ENCODE measurements at regions of chr17 and their contacts with region 1.

Region 1: DNA sequence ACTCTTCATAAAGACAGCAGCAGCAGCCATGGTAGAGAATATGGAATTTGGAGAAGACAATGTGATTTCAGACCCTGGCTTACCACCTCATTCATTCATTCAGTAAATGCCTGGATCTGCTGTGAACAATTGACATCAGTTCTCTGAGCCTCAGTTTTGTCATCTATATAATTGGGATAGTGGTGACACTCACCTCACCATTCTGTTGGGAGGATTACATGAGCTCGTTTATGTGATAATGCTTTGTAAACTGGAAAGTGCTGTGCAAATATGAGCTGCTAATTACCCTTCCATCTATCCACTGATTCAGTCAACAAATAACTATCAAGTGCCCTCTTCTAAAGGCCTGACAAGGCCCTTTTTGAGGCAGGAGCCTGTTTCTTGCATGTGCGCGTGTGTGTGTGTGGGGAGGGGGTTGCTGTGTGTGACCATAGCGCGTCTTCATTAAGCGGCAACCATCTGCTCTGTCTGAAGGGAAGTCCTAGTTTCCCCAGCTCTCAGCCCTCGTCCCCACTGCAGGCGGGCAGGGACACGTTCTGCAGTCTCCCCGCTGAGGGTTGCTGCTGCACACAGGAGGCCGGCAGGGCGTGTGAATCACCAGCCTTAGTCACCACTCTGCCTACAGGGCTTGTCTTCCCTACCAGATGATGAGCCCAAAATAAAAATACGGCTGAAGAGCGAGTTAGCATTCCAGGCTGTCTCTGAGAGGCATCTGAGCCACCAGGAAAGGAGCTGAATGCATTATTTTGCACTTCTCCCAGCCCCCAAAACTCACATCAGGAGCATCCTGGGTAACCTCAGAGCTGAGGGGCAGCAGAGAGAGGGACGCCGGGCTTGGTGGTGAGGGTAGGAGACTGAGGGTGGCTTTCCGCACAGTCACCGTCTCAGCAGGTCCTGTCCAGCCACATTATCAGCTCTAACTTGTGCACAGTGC is 19.9 kb downstream of the ARL4D start:
- DNase-seq: peak; percentile 55
- ATAC-seq: peak; percentile 99
- H3K4me3 ChIP-seq: peak overlapping the region in 1 of 2 experiments; percentile 33; a peak in 1 of 4 replicates
- H3K27ac ChIP-seq: peak overlapping the region; percentile 39
- H3K4me1 ChIP-seq: peaks cover 6 to 27% of the 10 kb centered on the region in 2 experiments
- H3K27me3 ChIP-seq: no peaks in the 10 kb centered on the region
- CTCF ChIP-seq: no peak
- POLR2A ChIP-seq: no peak
- RAD21 ChIP-seq: peak; percentile 24; the same call in 1 of the 2 replicates

Region 2: GRCh38 chr17:43393944-43394482 is 24.7 kb before region 1 on chr17:
- CTCF ChIA-PET with region 1: interaction called, 5 read pairs
- POLR2A ChIA-PET with region 1: interaction called, 12 read pairs
- RAD21 ChIA-PET with region 1: no interaction called
- intact Hi-C with region 1: no loop called
- DNase-seq: peak; percentile 79
- ATAC-seq: peak; percentile 59
- H3K4me3 ChIP-seq: no peak overlapping the region
- H3K27ac ChIP-seq: no peak overlapping the region
- H3K4me1 ChIP-seq: peaks cover 3 to 24% of the 10 kb centered on the region in 2 experiments; a peak in 3 of 4 replicates
- H3K27me3 ChIP-seq: no peaks in the 10 kb centered on the region
- CTCF ChIP-seq: peak; percentile 82 to 99 (median 96)
- POLR2A ChIP-seq: no peak
- RAD21 ChIP-seq: peak; percentile 100

Region 3: DNA sequence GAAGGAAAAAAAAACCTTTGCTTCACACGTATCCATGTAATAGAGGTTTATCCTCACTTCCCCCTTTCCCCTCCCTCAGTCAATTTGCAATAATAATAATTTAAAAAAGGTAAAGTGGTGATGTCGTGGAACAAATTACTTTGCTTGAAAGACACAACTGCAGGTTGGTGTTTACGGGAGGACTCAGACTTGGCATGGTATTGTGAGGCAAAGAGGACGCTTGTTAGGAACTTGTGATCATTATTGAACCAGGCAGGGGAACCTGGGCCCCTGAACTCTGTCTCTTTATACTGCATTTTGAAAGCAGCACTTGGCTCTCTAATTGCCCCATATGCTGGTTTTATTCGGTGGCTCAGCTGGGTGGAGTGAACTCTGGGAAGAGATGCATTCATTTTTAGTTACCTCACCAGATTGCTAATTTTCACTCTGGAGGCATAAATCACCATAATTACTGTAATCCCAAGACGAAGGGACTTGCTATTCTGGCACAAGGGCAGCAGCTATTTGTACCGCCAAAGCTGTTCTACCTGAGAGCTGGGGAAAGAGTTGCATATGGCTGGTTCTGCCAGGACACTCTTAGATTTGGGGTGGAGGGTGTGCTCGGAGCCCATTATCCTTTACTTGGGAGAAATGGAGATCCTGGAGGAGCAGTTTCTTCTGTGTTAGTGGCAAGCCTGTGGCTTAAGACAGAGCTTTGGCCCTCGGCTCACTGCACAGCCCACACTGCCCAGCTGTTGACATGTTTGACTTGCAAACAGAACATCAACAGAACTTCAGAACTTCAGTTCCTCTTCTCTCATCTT is 59.3 kb after region 1 on chr17:
- CTCF ChIA-PET with region 1: no interaction called
- POLR2A ChIA-PET with region 1: no interaction called
- RAD21 ChIA-PET with region 1: no interaction called
- intact Hi-C with region 1: loop called (anchors 2 kb)
- DNase-seq: no peak
- ATAC-seq: no peak
- H3K4me3 ChIP-seq: no peak overlapping the region
- H3K27ac ChIP-seq: no peak overlapping the region
- H3K4me1 ChIP-seq: peaks cover 0 to under 1% of the 10 kb centered on the region in 2 experiments; a peak in 2 of 4 replicates
- H3K27me3 ChIP-seq: no peaks in the 10 kb centered on the region
- CTCF ChIP-seq: no peak
- POLR2A ChIP-seq: no peak
- RAD21 ChIP-seq: no peak

Measured in HCT116 (cell line).